ENCODE measurements at regions of chr3 and their contacts with region 1.

Region 1: GRCh38 chr3:193772422-193772763 is 179.4 kb downstream of the OPA1 start:
- DNase-seq: no peak
- ATAC-seq: no peak
- H3K4me3 ChIP-seq: no peak overlapping the region
- H3K27ac ChIP-seq: no peak overlapping the region
- H3K4me1 ChIP-seq: no peaks in the 10 kb centered on the region
- H3K27me3 ChIP-seq: no peaks in the 10 kb centered on the region
- CTCF ChIP-seq: no peak
- POLR2A ChIP-seq: no peak

Region 2: GRCh38 chr3:194323785-194324735 is 551.7 kb after region 1 on chr3:
- intact Hi-C with region 1: loop called in 1 of 2 experiments (anchors 5 kb)
- DNase-seq: peak in 1 of 3 donors; percentile 52
- ATAC-seq: peak; percentile 8 to 24 (median 14)
- H3K4me3 ChIP-seq: no peak overlapping the region
- H3K27ac ChIP-seq: no peak overlapping the region
- H3K4me1 ChIP-seq: peaks cover 0 to 13% (median 5%) of the 10 kb centered on the region in 4 donors
- H3K27me3 ChIP-seq: no peaks in the 10 kb centered on the region
- CTCF ChIP-seq: no peak
- POLR2A ChIP-seq: no peak